ENCODE measurements at regions of chr19 and their contacts with region 1.

Region 1: GRCh38 chr19:29610563-29611271 is 4.6 kb downstream of the POP4 start:
- DNase-seq: peak; percentile 76 to 90 (median 84)
- H3K4me3 ChIP-seq: no peak overlapping the region
- H3K27ac ChIP-seq: no peak overlapping the region
- H3K4me1 ChIP-seq: peaks cover 0 to 9% of the 10 kb centered on the region in 2 donors
- H3K27me3 ChIP-seq: no peaks in the 10 kb centered on the region
- CTCF ChIP-seq: peak; percentile 72 to 85 (median 78)
- POLR2A ChIP-seq: no peak

Region 2: DNA sequence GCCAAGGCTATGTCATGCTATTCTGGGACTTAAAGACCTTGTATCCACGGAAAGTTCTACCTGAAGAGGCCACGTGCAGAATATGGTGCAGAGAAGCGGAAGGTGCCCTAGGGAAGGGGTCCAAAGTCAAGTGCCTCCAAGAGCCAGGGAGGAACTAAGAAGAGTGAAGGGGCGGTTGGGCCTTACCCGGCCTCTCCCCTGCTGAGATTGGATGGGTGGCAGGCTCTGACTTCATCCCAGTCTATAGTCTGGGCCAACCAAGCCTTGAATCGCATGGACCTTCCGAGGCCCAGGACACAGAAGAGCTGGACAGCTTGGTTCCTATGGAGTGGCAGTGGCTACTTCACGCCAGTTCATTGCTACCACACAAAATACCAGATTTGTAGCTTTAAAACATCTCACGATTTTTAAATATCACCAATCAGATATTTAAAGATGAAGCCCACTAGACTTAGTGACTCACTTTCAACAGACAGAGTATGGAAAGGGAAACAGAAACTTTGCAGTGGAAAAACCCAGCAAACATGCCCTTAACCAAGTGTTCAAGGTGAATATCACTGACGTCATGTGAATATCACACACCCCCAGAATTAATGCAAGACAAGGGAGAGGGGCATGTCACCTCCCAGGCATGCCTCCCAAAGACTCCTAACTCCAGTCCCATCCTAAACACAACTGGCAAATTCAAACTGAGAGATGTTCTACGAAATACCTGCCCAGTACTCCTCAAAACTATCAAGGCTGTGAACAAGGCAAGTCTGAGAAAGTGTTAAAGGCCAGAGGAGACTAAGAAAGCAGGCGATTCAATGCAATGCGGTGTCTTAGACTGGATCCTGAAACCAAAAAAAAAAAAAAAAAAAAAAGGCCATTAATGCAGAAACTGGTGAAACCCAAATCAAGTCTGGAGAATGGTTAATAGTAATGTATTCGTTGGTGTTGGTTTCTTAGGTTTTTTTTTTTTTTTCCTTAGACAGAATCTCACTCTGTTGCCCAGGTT is 94.1 kb after region 1 on chr19:
- intact Hi-C with region 1: loop called in 1 of 2 experiments (anchors 5 kb)
- DNase-seq: no peak
- H3K4me3 ChIP-seq: no peak overlapping the region
- H3K27ac ChIP-seq: peak overlapping the region in 2 of 5 donors; percentile 46 to 70
- H3K4me1 ChIP-seq: peaks cover 21 to 31% of the 10 kb centered on the region in 2 donors
- H3K27me3 ChIP-seq: no peaks in the 10 kb centered on the region
- CTCF ChIP-seq: no peak
- POLR2A ChIP-seq: no peak

Region 3: DNA sequence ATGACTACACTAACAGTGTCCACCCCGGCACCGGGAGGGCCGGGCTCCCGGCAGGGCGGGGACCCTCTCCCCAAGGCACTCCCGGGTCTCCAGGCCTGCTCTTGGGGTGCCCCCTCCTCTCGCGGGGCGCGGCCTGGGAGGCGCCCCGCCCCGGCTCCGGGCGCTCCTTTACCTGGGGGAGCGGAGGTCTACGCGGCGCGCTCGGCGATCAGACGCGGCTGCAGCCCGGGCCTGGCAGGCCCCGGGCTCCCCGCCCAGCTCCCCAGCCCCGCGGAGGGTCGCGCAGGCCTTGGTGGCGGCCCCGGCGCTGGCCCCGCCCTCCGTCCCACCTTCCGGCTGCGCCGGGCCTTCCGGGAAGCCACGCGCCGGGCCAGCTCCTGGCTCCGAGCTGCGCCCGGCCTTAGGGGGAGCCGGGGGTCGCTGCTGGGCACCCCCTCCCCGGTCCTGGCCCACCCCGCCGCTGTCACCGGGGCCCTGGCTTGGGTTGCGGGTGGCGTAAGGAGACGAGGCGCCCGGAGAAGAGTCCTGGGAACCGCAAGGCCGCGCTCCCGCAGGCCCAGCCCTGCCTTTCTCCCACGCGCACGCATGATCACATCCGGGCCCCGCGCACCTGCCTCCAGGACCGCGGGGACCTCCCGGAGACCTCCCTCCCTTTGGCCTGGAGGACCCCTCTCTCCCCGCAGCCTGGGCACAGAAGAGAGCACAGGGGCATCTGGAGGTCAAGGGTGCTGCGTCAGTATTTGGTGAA is 104.4 kb after region 1 on chr19 and contains the start of gene C19orf12:
- intact Hi-C with region 1: loop called (anchors 2 to 5 kb)
- DNase-seq: peak; percentile 56 to 69 (median 64)
- H3K4me3 ChIP-seq: peak within 1 kb of the TSS; percentile 24 to 83 (median 74)
- H3K27ac ChIP-seq: peak within 1 kb of the TSS; percentile 87 to 98 (median 97)
- H3K4me1 ChIP-seq: peaks cover 26 to 34% of the 10 kb centered on the region in 2 donors
- H3K27me3 ChIP-seq: no peaks in the 10 kb centered on the region
- CTCF ChIP-seq: no peak
- POLR2A ChIP-seq: peak; percentile 65 to 78
- total RNA-seq, gene C19orf12: 30.1 to 68.5 (median 47.0) TPM

Measured in adrenal gland (tissue), 19 donors.